Left ventricle myocardium superior (tissue), 1 donor: ENCODE measurements at regions of chr1 and their contacts with region 1.

Region 1: DNA sequence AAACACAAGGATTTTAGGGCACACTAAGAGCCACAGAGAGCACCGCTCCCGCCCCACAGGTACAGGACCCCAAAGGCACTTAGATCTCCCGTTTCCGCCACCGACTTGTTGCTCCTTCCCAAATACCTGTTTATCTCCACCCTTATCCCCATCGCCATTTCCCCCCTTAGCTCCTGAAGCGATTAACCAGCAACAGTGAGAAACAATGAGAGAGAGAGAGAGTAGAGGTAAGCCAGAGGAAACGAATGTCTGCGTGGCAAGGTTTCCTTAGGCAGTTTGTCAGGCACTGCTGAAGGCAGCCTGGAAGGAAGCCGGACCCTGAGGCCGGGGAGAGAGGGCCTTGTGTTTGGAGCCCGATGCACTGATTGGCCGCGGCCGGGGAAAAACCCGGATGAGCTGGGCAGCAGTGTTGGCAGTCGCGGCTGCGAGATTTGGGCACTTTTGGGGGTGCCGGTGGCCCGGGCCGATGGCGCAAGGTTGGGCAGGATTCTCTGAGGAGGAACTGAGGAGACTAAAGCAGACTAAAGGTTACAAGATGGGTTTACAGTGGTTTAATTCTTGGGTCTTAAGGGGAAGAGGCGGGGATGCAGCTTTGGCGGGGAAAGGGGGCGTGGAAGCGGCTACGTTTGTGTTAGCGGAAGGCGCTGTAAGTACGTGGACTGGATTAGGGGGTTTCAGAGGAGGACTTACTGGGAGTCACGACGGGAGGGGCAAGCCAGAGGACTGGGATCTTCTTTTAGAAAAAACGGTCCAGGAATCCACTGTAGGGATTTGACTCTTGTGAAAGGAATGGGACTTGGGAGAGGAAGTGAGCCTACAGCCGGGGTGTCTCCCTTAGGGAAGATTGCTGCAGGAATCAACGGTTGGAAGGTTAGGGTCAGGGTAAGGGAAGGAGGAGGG is at the start of gene GORAB:
- DNase-seq: peak; percentile 93
- ATAC-seq: peak; percentile 99
- total RNA-seq, gene GORAB: 10.0 TPM

Region 2: DNA sequence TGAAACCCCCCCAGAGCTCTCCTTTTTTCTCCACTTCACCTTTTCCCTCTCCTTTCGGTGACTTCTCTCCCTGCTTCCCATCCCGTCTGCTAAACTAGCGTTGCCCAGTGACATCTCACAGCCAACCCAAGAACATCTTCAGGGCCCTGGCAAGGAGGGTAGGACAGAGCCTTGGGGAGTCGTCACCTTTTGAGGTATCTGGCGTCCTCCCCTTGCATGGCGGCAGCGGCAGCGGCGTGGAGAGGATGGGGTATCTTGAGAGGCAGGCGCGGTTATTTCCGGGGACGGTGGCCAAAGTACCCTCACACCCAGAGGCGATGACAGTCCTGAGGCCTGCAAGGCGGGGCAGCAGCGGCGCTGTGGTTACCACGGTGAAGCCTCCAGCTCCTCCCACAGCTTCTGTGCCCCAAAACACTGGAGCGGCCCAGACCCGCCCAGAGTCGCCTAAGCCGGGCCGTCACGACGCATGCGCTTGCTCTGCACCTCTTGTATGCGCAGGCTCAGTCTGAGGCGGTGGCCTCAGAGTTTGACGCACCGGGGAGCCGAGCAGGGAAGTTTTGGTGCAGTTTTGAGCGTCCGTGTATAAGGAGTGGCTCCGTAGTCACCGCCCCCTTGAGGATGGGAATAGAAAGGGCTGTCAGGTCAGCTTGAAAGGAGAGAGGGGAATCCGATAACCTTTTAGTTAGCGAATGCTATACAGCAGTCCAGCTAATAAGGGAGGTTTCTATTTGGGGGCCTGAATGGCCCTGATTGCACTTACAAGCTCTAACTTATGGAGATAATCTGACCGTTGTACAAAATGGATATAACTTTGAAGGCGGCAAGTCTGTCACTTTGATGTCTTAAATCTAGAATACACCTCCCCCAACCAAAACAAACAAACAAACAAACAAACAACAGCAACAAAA is 457.5 kb before region 1 on chr1 and contains the start of gene KIFAP3:
- intact Hi-C with region 1: loop called (anchors 10 kb)
- DNase-seq: peak; percentile 98
- ATAC-seq: peak; percentile 100
- total RNA-seq, gene KIFAP3: 20.7 TPM

Region 3: GRCh38 chr1:170664828-170665612 is 133.0 kb after region 1 on chr1:
- intact Hi-C with region 1: loop called (anchors 5 kb)
- DNase-seq: peak; percentile 75
- ATAC-seq: peak; percentile 75